Endothelial cell of umbilical vein (primary cell): ENCODE measurements at regions of chr18 and their contacts with region 1.

Region 1: GRCh38 chr18:42114310-42114943 is 159.4 kb downstream of the PIK3C3 start:
- DNase-seq: peak; percentile 78
- H3K4me3 ChIP-seq: no peak overlapping the region
- H3K27ac ChIP-seq: no peak overlapping the region
- H3K4me1 ChIP-seq: no peaks in the 10 kb centered on the region
- H3K27me3 ChIP-seq: peaks cover 0 to 2% of the 10 kb centered on the region in 2 experiments
- CTCF ChIP-seq: peak; percentile 72 to 73
- POLR2A ChIP-seq: no peak

Region 2: DNA sequence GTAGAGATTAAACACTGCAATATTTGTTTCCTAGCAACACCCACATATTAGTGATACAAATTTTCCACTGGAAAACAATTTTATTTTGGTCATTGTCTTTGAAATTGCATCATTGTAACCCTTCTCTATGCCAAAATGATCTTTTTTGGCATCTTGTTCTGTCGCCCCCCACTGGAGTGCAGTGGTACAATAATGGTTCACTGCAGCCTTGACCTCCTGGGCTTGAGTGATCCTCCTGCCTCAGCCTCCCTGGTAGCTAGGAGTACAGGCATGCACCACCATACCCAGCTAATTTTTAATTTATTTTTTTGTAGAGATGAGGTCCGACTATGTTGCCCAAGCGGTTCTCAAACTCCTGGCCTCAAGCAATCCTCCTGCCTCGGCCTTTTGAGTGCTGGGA is 42.0 kb before region 1 on chr18:
- CTCF ChIA-PET with region 1: interaction called, 13 read pairs
- POLR2A ChIA-PET with region 1: no interaction called
- dilution Hi-C with region 1: no loop called
- intact Hi-C with region 1: no loop called
- DNase-seq: no peak
- H3K4me3 ChIP-seq: no peak overlapping the region
- H3K27ac ChIP-seq: no peak overlapping the region
- H3K4me1 ChIP-seq: no peaks in the 10 kb centered on the region
- H3K27me3 ChIP-seq: no peaks in the 10 kb centered on the region
- CTCF ChIP-seq: no peak
- POLR2A ChIP-seq: no peak

Region 3: GRCh38 chr18:42126586-42126985 is 12.2 kb after region 1 on chr18:
- CTCF ChIA-PET with region 1: interaction called, 24 read pairs
- POLR2A ChIA-PET with region 1: no interaction called
- dilution Hi-C with region 1: no loop called
- intact Hi-C with region 1: no loop called
- DNase-seq: no peak
- H3K4me3 ChIP-seq: no peak overlapping the region
- H3K27ac ChIP-seq: no peak overlapping the region
- H3K4me1 ChIP-seq: no peaks in the 10 kb centered on the region
- H3K27me3 ChIP-seq: no peaks in the 10 kb centered on the region
- CTCF ChIP-seq: no peak
- POLR2A ChIP-seq: no peak

Region 4: GRCh38 chr18:43271593-43272432 is 1157.4 kb after region 1 on chr18:
- CTCF ChIA-PET with region 1: interaction called, 101 read pairs
- POLR2A ChIA-PET with region 1: no interaction called
- dilution Hi-C with region 1: no loop called
- intact Hi-C with region 1: loop called (anchors 1 kb)
- DNase-seq: peak; percentile 63
- H3K4me3 ChIP-seq: no peak overlapping the region
- H3K27ac ChIP-seq: no peak overlapping the region
- H3K4me1 ChIP-seq: no peaks in the 10 kb centered on the region
- H3K27me3 ChIP-seq: no peaks in the 10 kb centered on the region
- CTCF ChIP-seq: peak; percentile 32 to 42
- POLR2A ChIP-seq: no peak

Region 5: DNA sequence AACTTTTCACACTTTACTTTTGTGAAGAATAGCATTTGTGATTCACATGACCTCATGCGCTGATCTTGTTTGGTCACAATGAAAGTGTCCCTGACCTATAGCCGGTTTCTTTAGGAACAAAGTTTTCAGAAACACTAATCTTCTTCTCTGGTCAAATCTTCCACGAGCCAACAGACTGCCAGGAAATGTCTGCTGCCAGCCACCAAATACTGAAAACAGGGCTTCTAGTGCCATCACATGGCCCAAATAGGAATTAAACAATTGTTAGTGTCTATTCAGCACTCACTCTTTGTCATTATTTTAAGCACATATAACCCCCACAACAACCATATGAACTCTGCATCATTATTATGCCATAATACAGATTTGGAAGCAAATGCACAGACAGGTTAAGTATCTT is 1449.4 kb after region 1 on chr18:
- CTCF ChIA-PET with region 1: interaction called, 21 read pairs
- POLR2A ChIA-PET with region 1: no interaction called
- dilution Hi-C with region 1: no loop called
- intact Hi-C with region 1: loop called (anchors 1 kb)
- DNase-seq: peak; percentile 48
- H3K4me3 ChIP-seq: no peak overlapping the region
- H3K27ac ChIP-seq: no peak overlapping the region
- H3K4me1 ChIP-seq: no peaks in the 10 kb centered on the region
- H3K27me3 ChIP-seq: no peaks in the 10 kb centered on the region
- CTCF ChIP-seq: no peak
- POLR2A ChIP-seq: no peak

Region 6: DNA sequence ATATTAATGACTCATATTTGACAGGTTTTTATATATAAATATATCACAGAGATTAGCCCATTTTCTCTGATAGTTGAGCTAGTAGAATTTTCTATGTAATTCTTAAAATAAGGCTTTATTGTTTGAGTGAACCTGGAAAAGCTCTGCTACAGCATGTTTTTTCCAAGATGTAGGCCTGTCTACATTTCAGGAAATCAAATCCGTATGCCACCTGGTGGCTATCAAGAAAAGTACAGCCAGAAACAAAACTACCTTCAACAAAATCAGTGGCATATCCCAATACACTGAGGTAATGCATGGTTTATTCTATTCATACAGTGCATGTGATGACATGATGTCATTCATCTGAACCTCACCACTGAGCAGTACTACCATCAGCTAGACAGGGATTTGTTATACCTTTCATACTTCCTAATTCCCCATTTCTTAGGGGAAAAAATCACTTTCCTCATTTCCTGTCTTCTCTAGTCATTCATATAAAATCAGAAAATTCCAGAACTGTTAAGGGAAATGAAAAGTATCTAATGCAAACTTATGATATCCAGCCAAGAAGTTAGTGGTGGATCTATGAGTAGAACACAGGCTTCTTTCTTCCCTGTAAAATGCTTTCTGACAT is 1473.2 kb after region 1 on chr18:
- CTCF ChIA-PET with region 1: interaction called, 209 read pairs
- POLR2A ChIA-PET with region 1: no interaction called
- dilution Hi-C with region 1: no loop called
- intact Hi-C with region 1: loop called (anchors 1 kb)
- DNase-seq: peak; percentile 43
- H3K4me3 ChIP-seq: no peak overlapping the region
- H3K27ac ChIP-seq: no peak overlapping the region
- H3K4me1 ChIP-seq: no peaks in the 10 kb centered on the region
- H3K27me3 ChIP-seq: no peaks in the 10 kb centered on the region
- CTCF ChIP-seq: peak; percentile 44 to 56
- POLR2A ChIP-seq: no peak